Colonic mucosa (tissue), 4 donors: ENCODE measurements at regions of chr22 and their contacts with region 1.

Region 1: DNA sequence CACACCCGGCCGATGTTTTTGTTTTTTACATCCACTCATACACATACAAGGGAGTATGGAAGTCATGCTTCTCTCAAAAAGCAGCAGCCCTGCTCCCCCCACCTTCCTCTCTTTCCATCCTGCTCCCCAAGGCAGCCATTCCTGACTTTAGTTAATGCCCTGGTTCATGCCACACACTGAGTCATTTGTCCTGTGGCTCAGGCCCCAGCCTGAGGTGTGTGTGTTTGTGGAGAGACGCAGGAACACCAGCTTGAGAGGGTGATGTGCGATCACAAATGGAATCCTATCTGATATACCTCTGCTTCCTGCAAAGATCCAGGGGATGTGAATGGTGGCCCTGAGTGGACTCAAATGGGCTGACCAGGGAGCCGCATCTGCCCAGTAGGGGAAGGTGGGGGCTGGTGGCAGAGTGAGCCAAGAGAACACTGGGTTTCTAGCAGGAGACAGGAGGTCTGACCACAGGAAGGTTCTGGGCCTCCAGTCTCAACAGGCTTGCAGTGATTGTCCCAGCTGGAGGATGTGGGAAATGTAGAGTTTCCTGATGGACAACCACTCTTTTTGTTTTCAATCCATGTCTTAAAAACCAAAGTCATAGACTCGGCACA is 86.7 kb downstream of the OSBP2 start:
- DNase-seq: no peak
- H3K4me3 ChIP-seq: no peak overlapping the region
- H3K27ac ChIP-seq: no peak overlapping the region
- H3K4me1 ChIP-seq: no peaks in the 10 kb centered on the region
- H3K27me3 ChIP-seq: no peaks in the 10 kb centered on the region
- CTCF ChIP-seq: no peak

Region 2: DNA sequence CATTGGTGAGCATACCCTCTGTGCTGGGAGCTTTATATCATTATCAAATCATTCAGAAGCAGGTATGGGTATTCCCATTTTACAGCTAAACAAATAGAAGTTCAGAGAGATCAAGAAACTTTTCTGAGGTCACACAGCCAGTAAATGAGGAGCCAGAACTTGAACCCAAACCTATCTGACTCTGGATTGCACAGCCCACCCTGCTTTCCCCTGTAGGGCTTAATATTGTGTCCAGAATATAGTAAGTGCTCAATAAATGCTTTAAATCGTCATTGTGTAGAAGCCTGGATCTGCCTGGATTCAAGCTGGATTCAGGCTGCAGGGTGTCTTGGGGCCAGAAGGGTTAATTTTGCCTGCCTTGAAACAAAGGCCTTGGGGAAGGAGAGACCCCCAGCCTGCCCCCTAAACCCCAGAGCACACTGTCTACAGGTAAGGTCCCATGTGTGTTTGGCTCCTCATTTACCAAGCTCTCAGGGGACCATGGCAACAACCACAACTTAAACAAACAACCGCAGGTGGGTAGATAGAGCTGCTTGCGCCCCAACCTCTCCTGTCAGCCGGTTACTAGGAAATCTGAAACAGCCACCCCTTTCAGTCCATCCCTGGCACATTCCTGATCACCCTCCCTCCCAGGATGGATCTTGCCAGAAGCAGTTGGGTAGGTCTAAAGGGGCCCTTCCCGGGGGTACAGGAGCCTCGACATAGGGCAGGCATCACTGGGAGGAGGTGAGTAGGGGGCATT is 306.5 kb before region 1 on chr22:
- intact Hi-C with region 1: no loop called
- DNase-seq: no peak
- H3K4me3 ChIP-seq: no peak overlapping the region
- H3K27ac ChIP-seq: no peak overlapping the region
- H3K4me1 ChIP-seq: no peaks in the 10 kb centered on the region
- H3K27me3 ChIP-seq: no peaks in the 10 kb centered on the region
- CTCF ChIP-seq: no peak

Region 3: DNA sequence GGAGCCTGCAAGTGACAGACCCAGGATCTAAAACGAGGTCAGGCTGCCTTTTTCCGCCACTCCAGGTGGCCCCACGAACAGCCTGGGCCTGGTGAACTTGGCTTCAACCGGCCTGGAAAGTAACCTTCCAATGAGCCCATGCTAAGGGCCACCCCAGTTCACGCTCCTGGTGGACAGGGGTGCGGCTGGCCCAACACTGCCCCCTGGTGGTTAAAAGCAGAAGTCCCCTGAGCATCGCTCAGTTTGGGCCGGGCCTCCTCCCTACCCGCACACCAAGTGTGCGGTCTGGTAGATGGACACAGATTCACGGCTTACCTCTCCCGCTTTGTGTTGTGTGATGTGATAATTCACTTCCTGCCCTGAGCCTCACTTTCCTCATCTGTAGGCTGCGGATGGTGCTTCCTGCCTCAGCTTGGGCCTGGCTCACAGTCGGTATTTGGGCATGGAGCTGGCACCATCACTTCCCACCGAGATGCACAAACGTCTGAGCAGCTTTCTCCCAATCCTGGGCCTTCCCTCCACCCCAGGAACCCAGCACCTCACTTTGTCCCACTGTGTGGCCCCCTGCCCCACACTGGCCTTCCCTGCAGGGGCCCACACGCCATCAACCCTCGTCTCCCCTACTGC is 295.9 kb before region 1 on chr22:
- intact Hi-C with region 1: no loop called
- DNase-seq: peak; percentile 68
- H3K4me3 ChIP-seq: no peak overlapping the region
- H3K27ac ChIP-seq: no peak overlapping the region
- H3K4me1 ChIP-seq: no peaks in the 10 kb centered on the region
- H3K27me3 ChIP-seq: no peaks in the 10 kb centered on the region
- CTCF ChIP-seq: peak; percentile 99

Region 4: GRCh38 chr22:30866811-30867271 is 85.5 kb after region 1 on chr22:
- intact Hi-C with region 1: loop called (anchors 10 kb)
- DNase-seq: no peak
- H3K4me3 ChIP-seq: no peak overlapping the region
- H3K27ac ChIP-seq: no peak overlapping the region
- H3K4me1 ChIP-seq: no peaks in the 10 kb centered on the region
- H3K27me3 ChIP-seq: no peaks in the 10 kb centered on the region
- CTCF ChIP-seq: no peak

Region 5: DNA sequence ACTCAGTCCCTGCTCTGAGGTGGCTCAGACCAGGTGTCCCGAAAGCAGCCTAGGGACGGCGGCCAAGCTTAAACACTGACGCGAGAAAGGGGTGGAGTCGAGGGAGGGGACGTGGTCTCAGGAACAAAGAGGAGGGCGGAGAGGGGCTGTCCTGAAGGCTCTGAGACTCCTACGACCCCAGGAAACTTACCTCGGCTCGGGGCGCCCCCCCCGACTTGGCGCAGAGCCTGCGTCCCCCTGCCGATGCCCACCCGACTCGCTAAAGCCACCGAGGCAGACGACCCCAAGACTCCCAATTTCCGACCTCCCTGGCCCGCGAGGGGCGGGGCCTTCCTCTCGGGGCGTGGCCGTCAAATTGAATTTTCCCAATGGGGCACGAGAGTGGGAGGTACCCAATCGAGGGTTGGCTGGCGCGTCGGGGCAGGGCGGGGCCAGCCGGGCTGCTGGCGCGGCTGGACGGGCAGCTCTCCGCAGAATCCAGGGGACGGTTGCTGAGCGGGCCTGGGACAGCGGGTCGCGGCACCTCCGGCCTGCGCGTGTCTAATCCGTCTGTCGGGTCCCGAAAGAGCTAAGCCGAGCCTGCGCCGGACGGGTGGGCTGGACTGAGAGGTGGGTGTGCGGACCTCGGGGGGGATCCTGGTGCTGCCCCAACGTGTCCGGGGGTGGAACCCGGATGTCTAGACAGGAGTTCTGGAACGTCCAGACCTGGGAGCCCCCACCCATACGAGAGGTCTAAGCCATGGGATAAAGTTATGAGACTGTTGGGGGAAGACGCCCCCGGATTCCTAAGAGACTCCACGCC is 299.7 kb after region 1 on chr22 and contains the start of gene SMTN:
- intact Hi-C with region 1: no loop called
- DNase-seq: peak; percentile 98
- H3K4me3 ChIP-seq: peak within 1 kb of the TSS; percentile 61
- H3K27ac ChIP-seq: peak within 1 kb of the TSS; percentile 86
- H3K4me1 ChIP-seq: peaks cover 28% of the 10 kb centered on the region
- H3K27me3 ChIP-seq: no peaks in the 10 kb centered on the region
- CTCF ChIP-seq: no peak
- total RNA-seq, gene SMTN: 152 to 159 TPM